Vagina (tissue), 2 donors: ENCODE measurements at regions of chr2 and their contacts with region 1.

Region 1: DNA sequence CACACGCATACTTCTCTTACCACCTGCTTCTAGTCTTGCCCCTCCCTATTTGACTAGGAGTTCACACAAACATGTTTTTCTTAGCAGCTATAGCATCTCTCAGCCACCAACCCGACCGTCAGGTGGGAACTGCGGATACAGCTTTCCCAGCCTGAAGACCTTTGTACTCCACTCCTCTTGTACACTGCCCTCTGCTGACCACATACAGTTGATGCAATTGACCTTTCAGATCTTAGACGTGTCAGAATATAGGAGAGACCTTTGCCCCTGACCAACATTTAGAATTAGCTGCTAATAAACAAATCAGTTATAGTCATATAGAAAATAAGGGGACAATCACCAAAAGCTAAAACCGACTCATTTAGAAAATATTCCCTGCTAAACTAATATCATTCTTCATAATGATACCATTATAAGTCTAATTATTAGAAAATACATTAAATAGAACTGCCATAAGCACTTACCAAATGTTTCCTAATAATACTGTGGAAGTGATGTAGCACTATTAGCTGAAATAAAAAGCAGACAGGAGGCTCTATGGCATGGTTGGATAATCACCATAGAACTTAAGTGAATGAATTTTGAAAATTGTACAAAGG is 208.4 kb downstream of the RAD51AP2 start:
- DNase-seq: no peak
- H3K4me3 ChIP-seq: no peak overlapping the region
- H3K27ac ChIP-seq: no peak overlapping the region
- H3K4me1 ChIP-seq: no peaks in the 10 kb centered on the region
- H3K27me3 ChIP-seq: no peaks in the 10 kb centered on the region
- CTCF ChIP-seq: peak in 1 of 3 experiments; percentile 23
- POLR2A ChIP-seq: no peak

Region 2: GRCh38 chr2:16040271-16041010 is 1269.4 kb before region 1 on chr2:
- intact Hi-C with region 1: loop called (anchors 5 kb)
- DNase-seq: no peak
- H3K4me3 ChIP-seq: no peak overlapping the region
- H3K27ac ChIP-seq: no peak overlapping the region
- H3K4me1 ChIP-seq: no peaks in the 10 kb centered on the region
- H3K27me3 ChIP-seq: no peaks in the 10 kb centered on the region
- CTCF ChIP-seq: no peak
- POLR2A ChIP-seq: no peak

Region 3: DNA sequence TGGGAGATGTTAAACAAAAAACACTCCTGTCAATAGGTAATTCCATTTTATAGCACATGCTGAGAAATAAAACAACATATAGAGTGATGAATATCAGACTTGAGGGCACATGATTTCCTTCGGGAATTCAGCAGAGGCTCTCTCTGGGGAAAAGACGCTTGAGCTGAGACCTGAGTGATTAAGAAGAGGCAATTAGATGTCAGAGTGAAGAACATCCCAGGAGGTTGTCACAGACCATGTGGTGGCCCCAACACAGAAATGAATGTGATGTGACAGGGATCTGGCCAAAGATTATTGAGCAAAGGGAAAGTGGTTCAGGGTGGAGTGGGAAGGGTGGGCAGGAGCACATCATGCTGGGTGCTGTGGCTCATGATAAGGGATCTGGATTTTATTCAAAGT is 46.3 kb before region 1 on chr2:
- intact Hi-C with region 1: no loop called
- DNase-seq: no peak
- H3K4me3 ChIP-seq: no peak overlapping the region
- H3K27ac ChIP-seq: no peak overlapping the region
- H3K4me1 ChIP-seq: no peaks in the 10 kb centered on the region
- H3K27me3 ChIP-seq: no peaks in the 10 kb centered on the region
- CTCF ChIP-seq: no peak
- POLR2A ChIP-seq: no peak